ENCODE measurements at regions of chr15 and their contacts with region 1.

Region 1: DNA sequence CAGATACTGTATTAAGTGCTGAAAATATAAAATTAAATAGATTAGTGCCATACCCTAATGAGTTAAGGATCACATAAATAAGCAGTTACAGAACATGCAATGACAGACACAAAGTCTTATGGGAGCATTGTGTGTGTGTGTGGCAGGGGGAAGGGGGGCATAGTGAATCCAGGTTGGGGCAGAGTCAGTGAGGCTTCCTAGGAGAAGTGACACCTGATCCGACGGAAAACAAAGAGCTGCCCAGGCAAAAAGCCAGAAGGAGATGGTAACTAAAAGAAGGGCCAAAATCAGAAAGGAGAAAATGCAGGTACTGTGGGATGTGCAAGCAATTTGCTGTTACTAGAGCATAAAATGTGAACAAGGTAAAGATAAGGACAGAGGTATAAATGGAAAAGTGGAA is 80.1 kb upstream of the CHRM5 start:
- DNase-seq: no peak
- H3K4me3 ChIP-seq: no peak overlapping the region
- H3K27ac ChIP-seq: no peak overlapping the region
- H3K4me1 ChIP-seq: no peaks in the 10 kb centered on the region
- H3K27me3 ChIP-seq: no peaks in the 10 kb centered on the region
- CTCF ChIP-seq: no peak
- POLR2A ChIP-seq: no peak

Region 2: GRCh38 chr15:33492434-33493052 is 395.6 kb before region 1 on chr15:
- intact Hi-C with region 1: no loop called
- DNase-seq: no peak
- H3K4me3 ChIP-seq: no peak overlapping the region
- H3K27ac ChIP-seq: no peak overlapping the region
- H3K4me1 ChIP-seq: no peaks in the 10 kb centered on the region
- H3K27me3 ChIP-seq: no peaks in the 10 kb centered on the region
- CTCF ChIP-seq: no peak
- POLR2A ChIP-seq: no peak

Region 3: GRCh38 chr15:33526532-33526931 is 361.6 kb before region 1 on chr15:
- intact Hi-C with region 1: no loop called
- DNase-seq: no peak
- H3K4me3 ChIP-seq: no peak overlapping the region
- H3K27ac ChIP-seq: no peak overlapping the region
- H3K4me1 ChIP-seq: no peaks in the 10 kb centered on the region
- H3K27me3 ChIP-seq: no peaks in the 10 kb centered on the region
- CTCF ChIP-seq: no peak
- POLR2A ChIP-seq: no peak

Region 4: DNA sequence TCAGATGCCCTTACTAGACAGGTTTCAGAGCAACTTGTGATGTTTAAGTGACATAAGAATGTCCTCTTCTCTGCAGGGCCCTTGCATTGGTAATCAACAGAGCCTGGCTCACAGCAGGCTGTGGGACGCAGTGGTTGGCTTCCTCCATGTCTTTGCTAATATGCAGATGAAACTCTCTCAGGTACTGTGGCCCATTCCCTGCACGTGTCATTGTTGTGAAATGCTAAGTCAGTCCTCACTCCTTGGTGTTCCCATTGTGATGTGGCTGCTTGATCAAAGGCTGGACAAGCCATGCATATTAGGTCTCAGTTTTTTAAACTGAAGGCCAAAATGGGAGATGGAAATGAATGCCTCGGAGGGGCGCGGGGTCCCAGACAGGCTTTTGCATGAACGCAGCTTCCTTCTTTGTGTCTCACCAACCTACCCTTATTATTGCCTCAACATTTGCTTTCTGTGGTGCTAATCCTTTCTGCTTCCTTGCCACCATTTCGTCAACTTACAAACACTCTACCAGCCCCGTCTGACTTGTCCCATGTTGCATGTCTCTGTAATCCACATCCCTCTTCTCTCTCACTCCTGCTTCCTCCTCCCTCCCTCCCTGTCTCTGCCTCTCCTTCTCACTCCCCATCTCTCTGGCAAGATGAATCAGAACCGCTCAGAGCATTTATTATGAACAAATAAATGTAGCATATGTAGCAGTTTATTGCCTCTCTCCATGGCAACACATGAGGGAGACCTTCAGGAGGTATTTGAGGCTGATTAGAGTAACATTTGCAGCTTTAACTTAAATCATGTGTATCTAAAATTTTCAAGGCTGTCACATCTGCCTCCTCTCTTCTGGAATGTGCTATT is 53.1 kb before region 1 on chr15:
- intact Hi-C with region 1: loop called (anchors 10 kb)
- DNase-seq: no peak
- H3K4me3 ChIP-seq: no peak overlapping the region
- H3K27ac ChIP-seq: no peak overlapping the region
- H3K4me1 ChIP-seq: peaks cover 4% of the 10 kb centered on the region
- H3K27me3 ChIP-seq: no peaks in the 10 kb centered on the region
- CTCF ChIP-seq: no peak
- POLR2A ChIP-seq: no peak

Measured in vagina (tissue), 2 donors.